Activated naive CD4-positive, alpha-beta T cell treated with anti-CD3 and anti-CD28 coated beads for 36 hours (primary cell): ENCODE measurements at regions of chr1 and their contacts with region 1.

Region 1: GRCh38 chr1:153990468-153991150 is at the start of gene RPS27:
- DNase-seq: peak; percentile 93
- H3K4me3 Mint-ChIP-seq: peak within 1 kb of the TSS; percentile 93
- H3K27ac Mint-ChIP-seq: peak within 1 kb of the TSS; percentile 97
- H3K4me1 Mint-ChIP-seq: peaks cover 47% of the 10 kb centered on the region
- H3K27me3 Mint-ChIP-seq: peaks cover 3% of the 10 kb centered on the region
- total RNA-seq, gene RPS27: 2,339 to 2,449 TPM

Region 2: GRCh38 chr1:153670859-153671627 is 319.6 kb before region 1 on chr1 and contains the start of gene ILF2:
- CTCF ChIA-PET with region 1: interaction called, 9 read pairs
- intact Hi-C with region 1: loop called (anchors 1 kb)
- DNase-seq: peak; percentile 99
- H3K4me3 Mint-ChIP-seq: no peak within 1 kb of the TSS
- H3K27ac Mint-ChIP-seq: no peak within 1 kb of the TSS
- H3K4me1 Mint-ChIP-seq: peaks cover 36% of the 10 kb centered on the region
- H3K27me3 Mint-ChIP-seq: no peaks in the 10 kb centered on the region
- total RNA-seq, gene ILF2: 346 to 357 TPM

Region 3: DNA sequence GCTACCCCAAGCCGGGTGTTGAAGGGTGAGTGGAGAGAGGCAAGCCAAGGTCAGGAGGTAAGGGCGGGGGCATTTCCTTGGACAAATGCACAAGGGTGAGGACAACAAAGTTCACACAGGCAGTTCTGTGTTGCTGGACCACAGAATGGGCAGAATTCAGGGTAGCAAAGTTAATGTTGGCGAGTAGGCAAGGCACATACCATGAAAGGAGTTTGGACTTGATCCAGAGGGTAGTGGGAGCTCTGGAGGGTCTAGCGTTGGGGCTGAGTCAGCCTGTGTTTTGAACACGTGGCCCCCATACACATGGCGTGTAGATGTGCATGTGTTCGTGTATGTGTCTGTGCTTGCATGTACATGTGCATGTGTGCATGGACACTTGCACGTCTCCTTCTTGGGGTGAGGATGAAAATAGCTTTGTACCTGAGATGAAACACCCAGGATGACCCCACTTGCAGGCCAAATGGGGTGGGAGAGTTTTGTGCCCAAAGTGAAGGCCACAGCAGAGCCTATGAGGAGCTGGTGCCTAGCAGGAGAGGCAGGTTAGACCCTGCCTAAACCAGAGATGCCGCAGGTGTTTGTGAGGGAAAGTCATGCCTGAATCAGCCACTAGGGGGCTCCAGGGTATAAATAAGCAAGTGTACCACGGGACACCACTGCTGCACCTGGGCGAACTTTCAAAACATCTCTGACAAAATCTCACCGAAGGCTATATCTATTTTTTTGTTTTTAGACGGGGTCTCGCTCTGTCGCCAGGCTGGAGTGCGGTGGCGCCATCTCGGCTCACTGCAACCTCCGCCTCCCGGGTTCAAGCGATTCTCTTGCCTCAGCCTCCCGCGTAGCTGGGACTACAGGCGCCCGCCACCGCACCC is 193.6 kb before region 1 on chr1:
- CTCF ChIA-PET with region 1: interaction called, 58 read pairs
- intact Hi-C with region 1: loop called (anchors 1 kb)
- DNase-seq: peak; percentile 95
- H3K4me3 Mint-ChIP-seq: no peak overlapping the region
- H3K27ac Mint-ChIP-seq: no peak overlapping the region
- H3K4me1 Mint-ChIP-seq: peaks cover 2% of the 10 kb centered on the region
- H3K27me3 Mint-ChIP-seq: no peaks in the 10 kb centered on the region

Region 4: GRCh38 chr1:153946622-153947241 is 43.9 kb before region 1 on chr1 and contains the start of gene DENND4B:
- CTCF ChIA-PET with region 1: interaction called, 19 read pairs
- intact Hi-C with region 1: loop called (anchors 1 kb)
- DNase-seq: peak; percentile 71
- H3K4me3 Mint-ChIP-seq: peak within 1 kb of the TSS; percentile 92
- H3K27ac Mint-ChIP-seq: peak within 1 kb of the TSS; percentile 95
- H3K4me1 Mint-ChIP-seq: peaks cover 21% of the 10 kb centered on the region
- H3K27me3 Mint-ChIP-seq: no peaks in the 10 kb centered on the region
- total RNA-seq, gene DENND4B: 124 to 130 TPM

Region 5: DNA sequence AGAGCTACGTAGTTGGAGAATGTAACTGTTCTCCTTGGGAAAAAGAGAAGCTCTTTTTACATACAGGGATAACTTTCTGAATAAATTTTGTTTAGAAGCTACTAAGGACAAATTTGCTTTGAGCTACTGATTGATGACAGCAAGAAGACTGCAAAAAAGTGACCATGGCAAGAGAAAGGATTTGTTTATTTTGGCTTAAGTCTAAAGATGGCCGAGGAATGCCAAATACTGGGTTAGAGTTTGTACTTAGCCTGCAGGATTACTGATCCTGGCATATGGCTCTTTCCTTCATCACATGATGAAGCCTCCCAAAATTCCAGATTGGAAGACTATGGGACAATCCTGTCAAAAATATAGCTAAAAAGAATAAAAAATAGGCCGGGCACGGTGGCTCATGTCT is 28.7 kb after region 1 on chr1:
- CTCF ChIA-PET with region 1: no interaction called
- intact Hi-C with region 1: no loop called
- DNase-seq: no peak
- H3K4me3 Mint-ChIP-seq: no peak overlapping the region
- H3K27ac Mint-ChIP-seq: no peak overlapping the region
- H3K4me1 Mint-ChIP-seq: no peaks in the 10 kb centered on the region
- H3K27me3 Mint-ChIP-seq: no peaks in the 10 kb centered on the region

Region 6: DNA sequence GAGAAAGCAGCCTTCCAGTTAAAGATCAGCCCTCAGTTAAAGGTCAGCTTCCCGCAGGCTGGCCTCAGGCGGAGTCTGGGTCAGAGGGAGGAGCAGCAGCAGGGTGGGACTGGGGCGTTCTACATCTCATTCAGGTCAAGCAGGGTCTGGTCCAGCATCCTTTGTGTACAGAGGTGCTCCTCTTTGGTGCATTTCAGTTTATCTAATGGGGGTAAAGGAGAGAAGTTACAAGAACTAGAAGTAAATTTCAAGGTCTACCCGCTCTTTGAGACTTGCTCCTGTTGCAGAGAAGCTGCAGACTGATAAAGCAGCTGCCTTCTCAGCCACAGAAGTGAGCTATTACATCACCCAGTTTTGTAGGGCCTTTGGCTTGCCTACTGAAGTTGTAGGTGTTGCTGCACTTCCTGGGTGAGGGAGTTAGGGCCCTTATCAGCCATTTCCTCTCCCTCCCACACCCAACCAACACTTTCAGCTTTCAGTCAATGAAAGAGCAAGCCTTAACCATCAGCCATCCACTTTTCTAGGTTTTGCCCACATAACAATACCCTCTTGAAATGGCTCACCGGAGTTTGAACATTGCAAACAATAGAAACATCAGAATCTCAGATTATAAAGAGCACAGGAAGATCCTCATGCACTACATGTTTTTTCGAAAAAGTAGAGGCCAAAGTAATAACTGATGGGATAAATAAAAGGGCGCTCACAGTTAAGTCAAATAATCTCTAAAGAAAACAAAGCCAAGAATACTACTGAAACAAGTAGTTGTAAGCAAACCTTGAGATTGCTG is 167.1 kb after region 1 on chr1:
- CTCF ChIA-PET with region 1: interaction called, 3 read pairs
- intact Hi-C with region 1: loop called (anchors 1 kb)
- DNase-seq: peak; percentile 87
- H3K4me3 Mint-ChIP-seq: peak overlapping the region; percentile 48
- H3K27ac Mint-ChIP-seq: peak overlapping the region; percentile 96
- H3K4me1 Mint-ChIP-seq: peaks cover 70% of the 10 kb centered on the region
- H3K27me3 Mint-ChIP-seq: no peaks in the 10 kb centered on the region

Region 7: GRCh38 chr1:154324669-154325582 is 334.3 kb after region 1 on chr1 and contains the start of gene ATP8B2:
- CTCF ChIA-PET with region 1: no interaction called
- intact Hi-C with region 1: loop called (anchors 5 kb)
- DNase-seq: peak; percentile 90
- H3K4me3 Mint-ChIP-seq: peak within 1 kb of the TSS; percentile 98
- H3K27ac Mint-ChIP-seq: peak within 1 kb of the TSS; percentile 94
- H3K4me1 Mint-ChIP-seq: peaks cover 37% of the 10 kb centered on the region
- H3K27me3 Mint-ChIP-seq: no peaks in the 10 kb centered on the region
- total RNA-seq, gene ATP8B2: 28.2 to 28.7 TPM